Lower leg skin (tissue), 4 donors: ENCODE measurements at regions of chr11 and their contacts with region 1.

Region 1: GRCh38 chr11:41446107-41446506 is 13.3 kb downstream of the LRRC4C start:
- DNase-seq: no peak
- H3K4me3 ChIP-seq: no peak overlapping the region
- CTCF ChIP-seq: no peak
- POLR2A ChIP-seq: no peak

Region 2: GRCh38 chr11:41486424-41486823 is 40.3 kb after region 1 on chr11:
- intact Hi-C with region 1: loop called (anchors 1 kb)
- DNase-seq: no peak
- H3K4me3 ChIP-seq: no peak overlapping the region
- CTCF ChIP-seq: no peak
- POLR2A ChIP-seq: no peak